ENCODE measurements at regions of chr10 and their contacts with region 1.

Region 1: DNA sequence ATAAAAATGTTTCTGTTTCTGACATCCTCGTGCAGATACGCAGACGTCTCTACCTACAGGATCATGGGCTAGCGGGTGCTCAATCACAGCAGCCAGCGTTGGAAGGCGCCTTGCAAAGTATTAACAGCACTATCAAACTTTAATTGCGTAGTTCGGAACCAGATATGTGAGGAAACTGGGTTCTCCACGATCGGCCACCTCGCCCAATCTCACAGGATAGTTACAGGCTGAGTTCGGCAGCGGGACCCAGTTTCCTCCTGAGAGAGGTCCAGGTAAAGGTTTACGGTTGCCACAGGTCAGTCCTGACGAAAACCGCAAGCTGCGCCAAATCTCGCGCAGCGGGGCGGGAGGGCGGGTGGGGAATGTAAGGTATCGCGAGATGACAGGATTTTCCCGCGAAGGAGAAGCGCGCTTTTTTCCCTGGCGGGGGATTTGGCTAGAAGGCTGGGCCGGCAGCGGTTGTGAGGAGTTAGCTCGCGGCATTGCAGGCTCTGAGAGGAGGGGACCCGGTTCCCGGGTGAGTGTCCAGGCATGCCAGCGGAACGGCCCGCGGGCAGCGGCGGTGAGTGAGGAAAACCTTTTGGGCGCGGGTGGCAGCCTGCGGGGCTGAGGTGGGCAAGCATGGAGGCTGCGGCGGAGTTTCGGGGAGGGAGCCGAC is at the start of gene HELLS:
- DNase-seq: peak; percentile 93
- H3K4me3 Mint-ChIP-seq: peak within 1 kb of the TSS; percentile 98
- H3K27ac Mint-ChIP-seq: peak within 1 kb of the TSS; percentile 97
- H3K4me1 Mint-ChIP-seq: peaks cover 24% of the 10 kb centered on the region
- H3K27me3 Mint-ChIP-seq: peaks cover 18% of the 10 kb centered on the region
- total RNA-seq, gene HELLS: 247 and 274 TPM in 2 replicates

Region 2: DNA sequence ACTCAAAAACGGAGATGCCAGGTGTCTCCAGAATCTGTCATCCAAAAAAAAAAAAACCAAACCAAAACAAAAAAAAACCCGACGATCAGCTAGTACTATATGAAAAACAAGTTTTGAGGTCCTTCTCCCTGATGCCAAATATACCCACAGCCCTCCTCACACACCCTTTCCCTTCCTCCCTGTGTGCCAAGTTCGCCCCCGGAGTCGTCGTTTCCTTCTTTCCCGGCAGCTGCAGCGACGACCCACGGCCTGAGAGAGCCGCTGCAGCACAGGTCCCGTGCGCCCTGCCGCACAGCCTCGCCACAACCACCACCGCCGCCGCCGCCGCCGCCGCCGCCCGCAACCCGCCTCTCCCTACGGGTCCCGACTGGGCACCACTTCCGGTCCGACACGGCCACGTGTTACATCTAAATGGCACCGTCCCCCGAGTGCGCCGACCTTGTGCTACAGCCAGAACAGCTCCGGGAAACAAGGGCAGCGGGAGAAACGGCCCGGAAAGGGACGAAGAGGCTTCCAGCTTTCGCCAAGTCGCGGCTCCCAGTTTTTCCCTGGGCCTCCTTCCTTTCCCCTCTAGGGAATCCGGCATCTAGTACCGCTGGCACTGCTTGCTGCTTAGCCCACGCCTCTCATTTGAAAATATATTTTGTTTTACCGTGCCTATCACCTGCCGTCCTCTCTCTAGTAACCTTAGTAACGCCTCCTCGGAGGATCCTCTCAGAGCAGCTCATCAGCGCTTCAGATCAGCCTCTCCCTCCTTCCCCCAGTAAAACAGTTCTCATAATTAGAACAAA is 843.1 kb before region 1 on chr10 and contains the start of gene FRA10AC1:
- intact Hi-C with region 1: loop called (anchors 10 kb)
- DNase-seq: peak; percentile 97
- H3K4me3 Mint-ChIP-seq: no peak within 1 kb of the TSS
- H3K27ac Mint-ChIP-seq: no peak within 1 kb of the TSS
- H3K4me1 Mint-ChIP-seq: peaks cover 10% of the 10 kb centered on the region
- H3K27me3 Mint-ChIP-seq: no peaks in the 10 kb centered on the region
- total RNA-seq, gene FRA10AC1: 22.5 and 22.8 TPM in 2 replicates

Region 3: GRCh38 chr10:93893646-93894515 is 651.6 kb before region 1 on chr10 and contains the start of gene SLC35G1:
- intact Hi-C with region 1: loop called (anchors 10 kb)
- DNase-seq: peak; percentile 88
- H3K4me3 Mint-ChIP-seq: peak within 1 kb of the TSS; percentile 86
- H3K27ac Mint-ChIP-seq: peak within 1 kb of the TSS; percentile 64
- H3K4me1 Mint-ChIP-seq: peaks cover 34% of the 10 kb centered on the region
- H3K27me3 Mint-ChIP-seq: peaks cover 9% of the 10 kb centered on the region
- total RNA-seq, gene SLC35G1: 6.3 and 6.4 TPM in 2 replicates

Region 4: GRCh38 chr10:94362360-94363250 is 182.9 kb before region 1 on chr10 and contains the start of gene NOC3L:
- intact Hi-C with region 1: loop called (anchors 2 kb)
- DNase-seq: peak; percentile 99
- H3K4me3 Mint-ChIP-seq: peak within 1 kb of the TSS; percentile 97
- H3K27ac Mint-ChIP-seq: peak within 1 kb of the TSS; percentile 96
- H3K4me1 Mint-ChIP-seq: peaks cover 27% of the 10 kb centered on the region
- H3K27me3 Mint-ChIP-seq: peaks cover 14% of the 10 kb centered on the region
- total RNA-seq, gene NOC3L: 56.8 and 56.9 TPM in 2 replicates

Region 5: GRCh38 chr10:94578790-94579189 is 33.3 kb after region 1 on chr10:
- intact Hi-C with region 1: no loop called
- DNase-seq: no peak
- H3K4me3 Mint-ChIP-seq: no peak overlapping the region
- H3K27ac Mint-ChIP-seq: no peak overlapping the region
- H3K4me1 Mint-ChIP-seq: peaks cover 2% of the 10 kb centered on the region
- H3K27me3 Mint-ChIP-seq: no peaks in the 10 kb centered on the region

Region 6: GRCh38 chr10:94591461-94592205 is 46.1 kb after region 1 on chr10:
- intact Hi-C with region 1: loop called (anchors 5 kb)
- DNase-seq: no peak
- H3K4me3 Mint-ChIP-seq: peak overlapping the region; percentile 45
- H3K27ac Mint-ChIP-seq: peak overlapping the region; percentile 83
- H3K4me1 Mint-ChIP-seq: peaks cover 16% of the 10 kb centered on the region
- H3K27me3 Mint-ChIP-seq: no peaks in the 10 kb centered on the region

Region 7: GRCh38 chr10:94607111-94607510 is 61.6 kb after region 1 on chr10:
- intact Hi-C with region 1: loop called (anchors 1 kb)
- DNase-seq: peak; percentile 46
- H3K4me3 Mint-ChIP-seq: no peak overlapping the region
- H3K27ac Mint-ChIP-seq: peak overlapping the region; percentile 88
- H3K4me1 Mint-ChIP-seq: peaks cover 21% of the 10 kb centered on the region
- H3K27me3 Mint-ChIP-seq: no peaks in the 10 kb centered on the region

Region 8: DNA sequence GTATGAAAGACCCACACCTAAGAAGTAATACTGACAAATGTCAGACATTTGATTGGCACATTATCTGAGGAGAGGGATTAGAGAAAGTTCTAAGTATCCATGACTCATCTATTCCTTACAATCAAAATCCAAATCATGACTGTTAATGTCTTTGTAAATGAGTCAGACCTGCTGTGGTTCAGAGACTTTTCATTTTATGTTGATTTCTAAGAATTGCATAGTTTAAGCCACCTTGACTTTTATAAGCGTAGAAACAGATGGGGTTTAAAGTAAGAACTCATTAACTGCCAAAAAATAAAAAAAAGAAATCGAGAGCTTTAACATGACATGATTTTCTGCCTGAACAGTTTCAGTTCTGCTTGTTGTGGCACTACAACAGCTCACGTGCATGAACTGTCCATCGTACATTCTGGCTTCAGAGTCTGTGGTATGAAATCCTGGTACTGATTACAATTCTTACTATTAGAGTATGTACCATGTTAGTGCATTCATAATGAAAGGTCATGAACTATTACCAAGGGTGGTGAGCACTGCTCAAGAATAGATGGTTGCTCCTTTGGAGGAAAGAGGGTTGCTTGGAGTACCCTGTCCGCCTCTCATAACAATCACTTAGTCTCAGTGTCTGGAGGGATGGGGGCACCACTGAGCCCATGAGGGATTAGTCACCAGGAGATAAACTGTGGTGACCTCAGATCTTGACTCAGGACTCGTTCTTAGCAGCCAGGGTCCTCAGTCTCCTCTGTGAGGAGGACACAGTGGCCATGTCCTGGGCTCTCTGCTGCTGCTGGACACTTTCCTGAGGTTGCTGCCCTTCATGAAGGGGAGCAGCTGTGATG is 690.8 kb after region 1 on chr10:
- intact Hi-C with region 1: loop called (anchors 5 kb)
- DNase-seq: no peak
- H3K4me3 Mint-ChIP-seq: peak overlapping the region; percentile 50
- H3K27ac Mint-ChIP-seq: peak overlapping the region; percentile 83
- H3K4me1 Mint-ChIP-seq: peaks cover 25% of the 10 kb centered on the region
- H3K27me3 Mint-ChIP-seq: peaks cover 3% of the 10 kb centered on the region